ENCODE measurements at regions of chr10 and their contacts with region 1.

Region 1: DNA sequence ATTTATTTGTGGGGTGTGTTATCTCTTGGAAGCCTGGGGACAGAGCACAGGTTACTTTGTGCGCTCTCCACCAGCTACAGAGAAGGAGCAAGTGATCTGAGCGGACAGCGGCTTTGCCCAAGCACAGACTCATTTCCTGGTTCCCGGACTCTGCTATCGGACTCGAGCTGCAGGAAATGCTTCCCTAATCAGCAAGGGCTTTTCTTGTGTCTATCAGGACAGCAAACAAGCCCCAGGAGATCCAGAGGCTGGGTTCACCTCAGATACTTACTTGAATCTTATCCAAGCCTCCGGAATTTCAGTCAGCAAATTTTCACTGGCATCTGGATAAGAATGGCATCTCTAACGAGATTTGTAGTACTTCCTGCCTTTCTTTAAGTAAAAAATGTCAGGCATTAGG is 27.8 kb downstream of the MRC1 start:
- DNase-seq: peak; percentile 46
- ATAC-seq: peak; percentile 61
- H3K4me3 ChIP-seq: peak overlapping the region; percentile 60
- H3K27ac ChIP-seq: peak overlapping the region; percentile 43
- H3K4me1 ChIP-seq: peaks cover 29% of the 10 kb centered on the region
- H3K27me3 ChIP-seq: no peaks in the 10 kb centered on the region
- CTCF ChIP-seq: 0 out of 2 replicates have a peak, but pooled peaks have one; percentile 9

Region 2: DNA sequence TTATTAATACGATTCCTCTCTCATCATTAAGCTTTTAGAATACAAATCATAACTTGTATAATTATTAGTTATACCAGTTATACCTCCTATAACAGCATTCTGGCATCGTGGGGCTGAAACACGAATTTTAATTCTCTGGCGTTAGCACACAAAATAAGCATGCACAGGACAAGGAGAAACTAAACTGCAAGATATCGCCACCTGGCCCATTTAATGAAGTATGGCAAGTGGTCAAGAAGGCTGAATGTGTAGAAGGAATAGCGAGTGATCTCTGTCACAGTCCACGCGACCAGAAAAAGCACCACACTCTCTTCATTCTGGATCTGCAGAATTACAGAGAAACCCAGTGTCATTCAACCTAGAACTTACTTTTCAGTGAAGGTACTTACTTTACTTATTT is 237.9 kb before region 1 on chr10:
- CTCF ChIA-PET with region 1: no interaction called
- POLR2A ChIA-PET with region 1: no interaction called
- intact Hi-C with region 1: no loop called
- DNase-seq: peak; percentile 25
- ATAC-seq: 0 out of 2 replicates have a peak, but pooled peaks have one; percentile 22
- H3K4me3 ChIP-seq: no peak overlapping the region
- H3K27ac ChIP-seq: no peak overlapping the region
- H3K4me1 ChIP-seq: no peaks in the 10 kb centered on the region
- H3K27me3 ChIP-seq: no peaks in the 10 kb centered on the region
- CTCF ChIP-seq: peak; percentile 34; the same call in 1 of the 2 replicates

Region 3: GRCh38 chr10:17742918-17743317 is 94.0 kb before region 1 on chr10:
- CTCF ChIA-PET with region 1: no interaction called
- POLR2A ChIA-PET with region 1: no interaction called
- intact Hi-C with region 1: loop called (anchors 5 kb)
- DNase-seq: peak; percentile 49
- ATAC-seq: no peak; the same call in 1 of the 2 replicates
- H3K4me3 ChIP-seq: no peak overlapping the region
- H3K27ac ChIP-seq: no peak overlapping the region
- H3K4me1 ChIP-seq: no peaks in the 10 kb centered on the region
- H3K27me3 ChIP-seq: no peaks in the 10 kb centered on the region
- CTCF ChIP-seq: peak; percentile 55

Region 4: DNA sequence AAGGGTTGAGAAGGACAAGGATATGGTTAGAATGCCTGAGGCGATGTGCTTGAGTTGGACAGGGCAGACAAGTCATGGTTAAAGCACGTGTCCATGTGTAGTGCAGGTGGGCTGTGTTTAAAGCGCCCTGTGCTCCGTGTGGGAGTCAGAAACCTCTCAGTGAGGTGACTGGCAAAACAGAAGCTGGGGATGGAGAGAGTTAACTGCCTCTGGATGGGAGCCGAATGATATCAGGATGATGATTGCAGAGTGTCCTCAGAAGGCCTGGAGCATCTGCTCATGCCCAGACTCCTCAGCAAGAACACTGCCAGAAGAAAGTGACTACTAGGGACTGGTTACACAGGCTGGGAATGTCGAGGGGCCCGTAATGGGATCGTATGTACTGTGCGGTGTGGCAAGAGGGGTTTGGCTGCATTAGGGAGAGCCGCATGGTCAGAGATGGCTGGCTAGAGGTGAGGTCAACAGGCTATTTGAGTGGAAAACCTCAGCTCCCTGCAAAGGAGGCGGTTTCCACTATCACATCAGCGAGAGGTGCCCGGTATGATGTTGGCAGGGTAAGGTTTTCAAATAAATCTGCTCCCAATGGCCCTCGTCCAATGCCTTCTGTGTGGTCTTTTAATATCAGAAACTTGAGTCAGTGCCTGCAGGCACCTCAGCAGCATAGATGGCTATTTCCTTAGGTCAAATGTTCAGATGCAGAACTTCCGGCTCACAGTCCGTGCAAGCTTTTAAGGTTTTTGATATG is 53.8 kb before region 1 on chr10:
- CTCF ChIA-PET with region 1: no interaction called
- POLR2A ChIA-PET with region 1: no interaction called
- intact Hi-C with region 1: loop called (anchors 5 kb)
- DNase-seq: peak; percentile 74
- ATAC-seq: peak; percentile 52
- H3K4me3 ChIP-seq: peak overlapping the region; percentile 40; the same call in 1 of the 2 replicates
- H3K27ac ChIP-seq: peak overlapping the region; percentile 78
- H3K4me1 ChIP-seq: peaks cover 42% of the 10 kb centered on the region
- H3K27me3 ChIP-seq: no peaks in the 10 kb centered on the region
- CTCF ChIP-seq: no peak

Region 5: DNA sequence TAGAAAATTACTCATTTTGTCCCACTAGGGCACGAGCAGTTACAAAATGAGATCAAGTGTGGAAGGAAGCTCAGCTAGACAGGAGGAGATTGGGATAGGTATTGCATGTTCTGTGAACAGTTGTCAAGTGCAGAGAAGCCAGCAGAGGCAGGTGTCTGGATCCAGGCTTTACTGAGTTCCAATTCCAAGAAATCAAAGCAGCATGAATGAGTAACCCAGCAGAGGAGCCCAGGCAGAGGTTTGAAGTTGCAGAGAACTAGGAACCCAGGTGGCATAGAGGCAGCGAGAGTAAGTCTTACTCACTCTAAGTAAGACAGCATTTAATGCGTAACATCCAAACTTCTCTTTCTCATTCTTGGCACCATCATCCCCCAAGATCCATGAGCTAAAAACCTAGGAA is 16.0 kb before region 1 on chr10:
- CTCF ChIA-PET with region 1: no interaction called
- POLR2A ChIA-PET with region 1: no interaction called
- intact Hi-C with region 1: no loop called
- DNase-seq: no peak
- ATAC-seq: no peak
- H3K4me3 ChIP-seq: no peak overlapping the region
- H3K27ac ChIP-seq: no peak overlapping the region
- H3K4me1 ChIP-seq: no peaks in the 10 kb centered on the region
- H3K27me3 ChIP-seq: no peaks in the 10 kb centered on the region
- CTCF ChIP-seq: no peak

Measured in PC-3 (cell line).